AG04449 (cell line): ENCODE measurements at regions of chr15 and their contacts with region 1.

Region 1: DNA sequence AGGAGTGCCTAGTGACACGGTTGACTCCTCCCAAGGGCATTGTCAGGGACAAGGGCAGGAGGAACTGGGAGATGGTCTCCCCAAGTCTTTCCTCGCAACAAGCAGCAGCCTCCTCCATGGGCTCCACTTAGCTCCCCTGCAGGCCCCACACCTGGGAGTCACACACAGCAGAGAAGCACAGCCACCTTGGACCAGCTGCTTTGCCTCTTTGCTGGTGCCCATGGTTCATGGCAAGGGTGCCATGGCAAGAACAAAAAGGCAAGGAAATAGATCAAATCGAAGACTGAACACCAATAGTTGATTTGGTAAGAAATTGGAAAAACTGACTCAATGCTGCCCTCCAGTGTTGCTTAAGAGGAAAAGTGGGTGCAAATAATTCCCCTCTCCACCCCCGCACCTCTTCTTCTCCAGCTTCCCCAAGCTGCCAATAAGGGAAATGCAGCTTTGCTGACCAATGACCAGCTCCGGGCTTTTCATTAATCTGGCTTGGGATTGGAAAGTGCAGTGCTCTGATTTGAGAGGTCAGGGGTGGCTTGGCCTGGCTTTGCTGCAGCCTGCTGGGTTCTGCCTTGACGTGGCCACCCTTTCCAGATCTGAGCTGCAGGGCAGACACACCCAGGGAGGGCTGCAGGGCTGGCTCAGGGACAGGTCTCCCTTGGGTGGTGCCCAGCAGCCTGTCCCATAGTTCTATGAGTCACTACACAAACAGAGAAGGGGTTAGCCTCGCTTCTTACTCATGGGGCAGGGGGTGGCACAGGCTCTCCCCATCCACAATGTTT is 162.0 kb downstream of the KLF13 start:
- DNase-seq: peak; percentile 61
- H3K4me3 ChIP-seq: no peak overlapping the region
- CTCF ChIP-seq: peak; percentile 74

Region 2: GRCh38 chr15:31128919-31129768 is 359.5 kb before region 1 on chr15:
- CTCF ChIA-PET with region 1: interaction called, 23 read pairs
- POLR2A ChIA-PET with region 1: no interaction called
- DNase-seq: no peak
- H3K4me3 ChIP-seq: no peak overlapping the region
- CTCF ChIP-seq: peak; percentile 95

Region 3: GRCh38 chr15:31215490-31216214 is 273.0 kb before region 1 on chr15:
- CTCF ChIA-PET with region 1: interaction called, 104 read pairs
- POLR2A ChIA-PET with region 1: no interaction called
- DNase-seq: no peak
- H3K4me3 ChIP-seq: peak overlapping the region; percentile 41
- CTCF ChIP-seq: peak; percentile 89

Region 4: GRCh38 chr15:31326156-31326732 is 162.4 kb before region 1 on chr15:
- CTCF ChIA-PET with region 1: interaction called, 22 read pairs
- POLR2A ChIA-PET with region 1: interaction called, 10 read pairs
- DNase-seq: peak; percentile 72
- H3K4me3 ChIP-seq: peak overlapping the region; percentile 73
- CTCF ChIP-seq: no peak

Region 5: GRCh38 chr15:31365655-31366127 is 122.9 kb before region 1 on chr15:
- CTCF ChIA-PET with region 1: interaction called, 55 read pairs
- POLR2A ChIA-PET with region 1: no interaction called
- DNase-seq: no peak
- H3K4me3 ChIP-seq: no peak overlapping the region
- CTCF ChIP-seq: peak; percentile 47

Region 6: GRCh38 chr15:31458591-31459399 is 29.8 kb before region 1 on chr15:
- CTCF ChIA-PET with region 1: interaction called, 12 read pairs
- POLR2A ChIA-PET with region 1: no interaction called
- DNase-seq: no peak
- H3K4me3 ChIP-seq: no peak overlapping the region
- CTCF ChIP-seq: no peak